ENCODE measurements at regions of chr5 and their contacts with region 1.

Region 1: GRCh38 chr5:150398722-150399523 is 13.8 kb downstream of the CD74 start:
- DNase-seq: peak; percentile 31 to 47
- ATAC-seq: peak; percentile 70 to 79; a peak in 5 of 6 replicates
- H3K4me3 ChIP-seq: no peak overlapping the region
- H3K27ac ChIP-seq: no peak overlapping the region
- H3K4me1 ChIP-seq: no peaks in the 10 kb centered on the region
- CTCF ChIP-seq: no peak
- EP300 ChIP-seq: no peak
- POLR2A ChIP-seq: no peak
- RAD21 ChIP-seq: no peak

Region 2: GRCh38 chr5:150286890-150287219 is 112.1 kb before region 1 on chr5:
- CTCF ChIA-PET with region 1: no interaction called
- POLR2A ChIA-PET with region 1: no interaction called
- DNase-seq: peak; percentile 57 to 82
- ATAC-seq: peak; percentile 88 to 96
- H3K4me3 ChIP-seq: no peak overlapping the region
- H3K27ac ChIP-seq: no peak overlapping the region
- H3K4me1 ChIP-seq: peaks cover 4% of the 10 kb centered on the region; the same call in 1 of the 3 replicates
- CTCF ChIP-seq: peak; percentile 20; the same call in 1 of the 3 replicates
- EP300 ChIP-seq: no peak
- POLR2A ChIP-seq: no peak
- RAD21 ChIP-seq: peak in 1 of 2 experiments; percentile 36; a peak in 1 of 5 replicates

Region 3: GRCh38 chr5:150409638-150410523 is 11.0 kb after region 1 on chr5:
- CTCF ChIA-PET with region 1: interaction called, 11 read pairs
- POLR2A ChIA-PET with region 1: no interaction called
- DNase-seq: peak; percentile 86 to 99
- ATAC-seq: peak; percentile 96 to 98
- H3K4me3 ChIP-seq: no peak overlapping the region
- H3K27ac ChIP-seq: peak overlapping the region in 1 of 2 experiments; percentile 51; a peak in 3 of 6 replicates
- H3K4me1 ChIP-seq: peaks cover 4% of the 10 kb centered on the region
- CTCF ChIP-seq: no peak
- EP300 ChIP-seq: no peak
- POLR2A ChIP-seq: no peak
- RAD21 ChIP-seq: no peak

Region 4: DNA sequence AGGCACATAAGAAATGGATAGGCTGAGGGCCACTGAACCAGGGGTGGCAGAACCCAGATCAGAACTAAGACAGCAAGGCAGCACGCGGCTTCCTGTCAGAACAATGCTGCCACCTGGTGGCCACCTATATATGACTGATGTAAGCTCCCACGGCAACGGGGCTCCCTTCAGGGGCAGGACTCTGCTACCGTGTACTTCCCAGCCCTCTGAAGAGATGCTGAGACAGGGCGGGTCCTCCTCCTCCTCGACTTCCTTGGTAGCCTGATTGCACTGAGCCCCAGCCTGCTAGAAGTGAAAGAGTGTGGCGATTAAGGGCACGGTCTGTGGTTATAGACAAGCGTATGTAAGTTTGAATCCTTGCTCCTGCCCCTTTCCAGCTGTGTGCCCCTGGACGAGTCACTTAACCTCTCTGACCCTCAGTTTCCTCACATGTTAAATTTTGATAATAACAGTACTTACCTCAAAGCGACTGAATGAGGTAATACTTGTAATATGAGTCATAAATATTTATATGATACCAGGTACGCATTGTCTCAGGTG is 37.3 kb after region 1 on chr5:
- CTCF ChIA-PET with region 1: interaction called, 6 read pairs
- POLR2A ChIA-PET with region 1: interaction called, 10 read pairs
- DNase-seq: peak; percentile 88 to 95
- ATAC-seq: peak; percentile 86 to 88
- H3K4me3 ChIP-seq: no peak overlapping the region
- H3K27ac ChIP-seq: no peak overlapping the region
- H3K4me1 ChIP-seq: no peaks in the 10 kb centered on the region
- CTCF ChIP-seq: peak; percentile 87
- EP300 ChIP-seq: no peak
- POLR2A ChIP-seq: no peak
- RAD21 ChIP-seq: peak; percentile 88 to 91